ENCODE measurements at regions of chr2 and their contacts with region 1.

Region 1: DNA sequence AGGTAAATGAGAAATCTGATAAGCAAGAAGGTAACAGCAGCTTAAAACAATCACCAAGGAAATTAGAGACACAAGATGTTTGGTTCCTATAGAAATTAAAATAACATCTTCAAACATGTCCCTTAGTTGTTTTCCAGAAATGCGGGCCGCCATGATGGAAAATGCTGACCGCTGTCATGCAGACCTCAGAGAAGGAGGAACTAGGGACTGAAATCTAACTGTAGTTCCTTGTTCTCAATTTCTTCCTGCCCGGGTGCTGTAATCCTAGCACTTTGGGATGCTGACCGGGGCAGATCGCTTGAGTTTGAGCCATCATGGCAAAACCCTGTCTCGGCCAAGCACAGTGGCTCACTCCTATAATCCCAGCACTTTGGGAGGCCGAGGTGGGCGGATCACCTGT is 51.1 kb downstream of the TEX51 start:
- DNase-seq: no peak
- H3K4me3 ChIP-seq: no peak overlapping the region
- H3K27ac ChIP-seq: no peak overlapping the region
- H3K4me1 ChIP-seq: peaks cover 0 to 10% (median 2%) of the 10 kb centered on the region in 4 donors
- H3K27me3 ChIP-seq: no peaks in the 10 kb centered on the region
- CTCF ChIP-seq: no peak
- EP300 ChIP-seq: no peak
- POLR2A ChIP-seq: no peak

Region 2: GRCh38 chr2:126686841-126687485 is 262.8 kb before region 1 on chr2:
- in situ Hi-C with region 1: no loop called
- intact Hi-C with region 1: no loop called
- DNase-seq: no peak
- H3K4me3 ChIP-seq: no peak overlapping the region
- H3K27ac ChIP-seq: no peak overlapping the region
- H3K4me1 ChIP-seq: no peaks in the 10 kb centered on the region
- H3K27me3 ChIP-seq: no peaks in the 10 kb centered on the region
- CTCF ChIP-seq: no peak
- EP300 ChIP-seq: no peak
- POLR2A ChIP-seq: no peak

Region 3: DNA sequence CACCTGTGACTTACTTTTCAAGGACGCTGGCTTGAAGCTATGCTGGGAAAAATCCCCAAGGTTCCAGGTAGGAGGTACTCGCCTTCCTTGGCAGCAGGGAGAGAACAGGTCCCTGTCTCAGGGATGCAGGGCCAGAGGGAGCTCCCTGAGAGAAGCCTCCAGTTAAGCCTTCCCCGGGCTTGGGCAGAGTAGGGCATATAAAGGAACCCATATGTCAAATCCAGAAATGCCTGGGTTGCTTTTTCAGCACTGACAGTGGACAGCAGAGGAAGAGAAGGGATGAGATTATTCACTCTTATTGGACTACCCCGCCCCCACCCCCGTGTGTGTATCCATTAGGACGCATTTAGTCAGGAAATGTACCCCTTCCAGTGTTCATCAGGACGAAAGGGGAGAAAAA is 140.4 kb before region 1 on chr2:
- in situ Hi-C with region 1: no loop called
- intact Hi-C with region 1: no loop called
- DNase-seq: no peak
- H3K4me3 ChIP-seq: no peak overlapping the region
- H3K27ac ChIP-seq: no peak overlapping the region
- H3K4me1 ChIP-seq: no peaks in the 10 kb centered on the region
- H3K27me3 ChIP-seq: no peaks in the 10 kb centered on the region
- CTCF ChIP-seq: no peak
- EP300 ChIP-seq: no peak
- POLR2A ChIP-seq: no peak

Region 4: DNA sequence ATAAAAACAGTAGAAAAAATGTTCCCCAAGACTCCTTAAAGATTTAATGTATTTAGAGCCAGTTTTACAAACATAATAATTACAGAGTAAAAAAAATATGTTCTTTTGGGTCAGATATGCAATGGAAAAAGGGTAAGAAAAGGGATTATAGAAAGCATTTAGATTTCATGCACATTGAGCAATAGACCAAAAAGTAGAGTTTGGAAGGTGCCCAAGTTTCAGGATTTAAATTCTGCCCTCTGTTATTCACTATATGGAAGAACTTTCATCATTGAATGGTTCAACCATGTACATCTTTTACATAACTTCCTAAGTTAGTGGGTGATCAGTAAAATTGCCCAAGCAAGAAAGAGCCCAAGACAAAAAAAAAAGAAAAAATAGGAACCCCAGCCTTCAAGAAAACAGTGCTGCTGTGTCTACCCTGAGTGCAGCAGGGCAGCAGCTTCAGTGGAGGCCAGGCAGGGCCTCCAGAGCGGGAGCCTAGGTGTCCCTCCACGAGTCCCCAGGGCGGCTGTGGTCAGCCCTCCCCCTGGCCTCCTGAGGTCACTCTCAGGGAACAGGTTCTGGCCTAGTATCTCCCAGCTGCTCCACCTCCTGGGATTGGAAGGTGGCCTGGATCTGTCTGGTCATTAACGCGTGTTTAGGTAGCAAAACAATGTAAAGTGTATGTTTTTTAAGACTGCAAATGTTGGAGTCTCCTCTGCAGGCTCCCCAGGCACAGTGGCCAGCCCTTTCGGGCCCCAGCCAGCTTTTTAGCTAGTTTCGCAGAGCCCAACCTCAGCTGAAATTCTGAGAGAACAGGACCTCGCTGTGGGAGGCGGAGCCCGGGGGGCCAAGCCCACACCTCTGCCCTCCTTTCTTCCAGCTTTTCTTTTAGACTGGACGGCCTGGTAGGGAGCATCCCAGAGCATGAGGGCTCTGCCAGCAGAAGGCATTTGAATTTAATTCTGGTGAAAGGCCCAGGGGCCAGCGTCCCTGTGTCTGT is 26.2 kb after region 1 on chr2:
- in situ Hi-C with region 1: no loop called
- intact Hi-C with region 1: loop called (anchors 1 kb)
- DNase-seq: no peak
- H3K4me3 ChIP-seq: no peak overlapping the region
- H3K27ac ChIP-seq: no peak overlapping the region
- H3K4me1 ChIP-seq: peaks cover 3 to 12% (median 7%) of the 10 kb centered on the region in 4 donors
- H3K27me3 ChIP-seq: no peaks in the 10 kb centered on the region
- CTCF ChIP-seq: no peak
- EP300 ChIP-seq: no peak
- POLR2A ChIP-seq: no peak